AG04450 (cell line): ENCODE measurements at regions of chrX and their contacts with region 1.

Region 1: DNA sequence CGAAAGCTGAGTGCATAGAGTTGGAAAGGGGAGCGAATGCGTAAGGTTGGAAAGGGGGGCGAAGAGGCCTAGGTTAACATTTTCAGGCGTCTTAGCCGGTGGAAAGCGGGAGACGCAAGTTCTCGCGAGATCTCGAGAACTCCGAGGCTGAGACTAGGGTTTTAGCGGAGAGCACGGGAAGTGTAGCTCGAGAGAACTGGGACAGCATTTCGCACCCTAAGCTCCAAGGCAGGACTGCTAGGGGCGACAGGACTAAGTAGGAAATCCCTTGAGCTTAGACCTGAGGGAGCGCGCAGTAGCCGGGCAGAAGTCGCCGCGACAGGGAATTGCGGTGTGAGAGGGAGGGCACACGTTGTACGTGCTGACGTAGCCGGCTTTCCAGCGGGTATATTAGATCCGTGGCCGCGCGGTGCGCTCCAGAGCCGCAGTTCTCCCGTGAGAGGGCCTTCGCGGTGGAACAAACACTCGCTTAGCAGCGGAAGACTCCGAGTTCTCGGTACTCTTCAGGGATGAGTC is at the start of gene DDX3X:
- DNase-seq: peak; percentile 70
- H3K4me3 ChIP-seq: peak within 1 kb of the TSS; percentile 87
- H3K27ac ChIP-seq: peak within 1 kb of the TSS; percentile 98
- H3K27me3 ChIP-seq: no peaks in the 10 kb centered on the region
- CTCF ChIP-seq: 0 out of 2 replicates have a peak, but pooled peaks have one; percentile 12
- polyA plus RNA-seq, gene DDX3X: 110 and 111 TPM in 2 replicates

Region 2: GRCh38 chrX:41313419-41313818 is 20.4 kb before region 1 on chrX:
- CTCF ChIA-PET with region 1: no interaction called
- POLR2A ChIA-PET with region 1: interaction called, 15 read pairs
- DNase-seq: no peak
- H3K4me3 ChIP-seq: no peak overlapping the region
- H3K27ac ChIP-seq: peak overlapping the region; percentile 57
- H3K27me3 ChIP-seq: no peaks in the 10 kb centered on the region
- CTCF ChIP-seq: no peak

Region 3: GRCh38 chrX:41347186-41347585 is 13.4 kb after region 1 on chrX:
- CTCF ChIA-PET with region 1: no interaction called
- POLR2A ChIA-PET with region 1: no interaction called
- DNase-seq: no peak
- H3K4me3 ChIP-seq: no peak overlapping the region
- H3K27ac ChIP-seq: no peak overlapping the region
- H3K27me3 ChIP-seq: no peaks in the 10 kb centered on the region
- CTCF ChIP-seq: no peak

Region 4: DNA sequence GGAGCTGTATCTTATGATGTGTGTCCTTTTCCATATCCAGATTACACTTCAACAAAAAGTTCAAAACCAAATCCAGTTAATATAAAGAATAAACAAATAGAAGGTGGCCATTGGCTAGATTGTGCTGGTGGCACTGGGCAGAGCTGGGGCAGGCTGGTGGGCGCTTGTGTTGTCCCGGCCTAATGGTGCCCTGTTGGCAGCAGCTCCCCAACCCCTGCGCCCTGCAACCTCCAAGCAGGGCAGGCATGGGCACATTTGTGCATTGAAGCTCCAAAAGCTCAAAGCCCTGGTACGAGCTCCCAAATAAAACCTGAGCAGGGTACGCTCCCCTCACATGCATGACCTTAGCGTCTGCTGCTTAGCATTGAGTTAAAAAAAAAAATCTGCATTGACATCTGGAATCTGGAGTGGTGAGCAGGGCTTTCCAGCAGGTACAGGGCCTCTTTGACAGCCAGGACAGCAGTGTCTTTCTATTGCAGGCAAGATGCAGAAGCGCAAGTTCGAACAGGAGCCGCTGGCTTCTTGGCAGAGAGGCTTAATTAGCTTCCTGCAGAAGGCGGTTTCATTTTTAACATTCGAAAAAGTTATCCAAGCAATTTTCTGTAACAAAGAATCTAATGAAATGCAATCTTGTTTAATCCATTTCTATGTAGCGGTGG is 87.4 kb after region 1 on chrX:
- CTCF ChIA-PET with region 1: no interaction called
- POLR2A ChIA-PET with region 1: interaction called, 20 read pairs
- DNase-seq: no peak
- H3K4me3 ChIP-seq: no peak overlapping the region
- H3K27ac ChIP-seq: no peak overlapping the region
- H3K27me3 ChIP-seq: no peaks in the 10 kb centered on the region
- CTCF ChIP-seq: no peak